GM18951 (cell line): ENCODE measurements at regions of chr9 and their contacts with region 1.

Region 1: GRCh38 chr9:83940590-83941302 is 19.5 kb upstream of the KIF27 start:
- POLR2A ChIP-seq: no peak

Region 2: GRCh38 chr9:84254972-84255371 is 314.2 kb after region 1 on chr9:
- in situ Hi-C with region 1: loop called (anchors 10 kb)
- POLR2A ChIP-seq: no peak